Activated CD4-positive, alpha-beta memory T cell treated with anti-CD3 and anti-CD28 coated beads for 36 hours (primary cell): ENCODE measurements at regions of chr10 and their contacts with region 1.

Region 1: DNA sequence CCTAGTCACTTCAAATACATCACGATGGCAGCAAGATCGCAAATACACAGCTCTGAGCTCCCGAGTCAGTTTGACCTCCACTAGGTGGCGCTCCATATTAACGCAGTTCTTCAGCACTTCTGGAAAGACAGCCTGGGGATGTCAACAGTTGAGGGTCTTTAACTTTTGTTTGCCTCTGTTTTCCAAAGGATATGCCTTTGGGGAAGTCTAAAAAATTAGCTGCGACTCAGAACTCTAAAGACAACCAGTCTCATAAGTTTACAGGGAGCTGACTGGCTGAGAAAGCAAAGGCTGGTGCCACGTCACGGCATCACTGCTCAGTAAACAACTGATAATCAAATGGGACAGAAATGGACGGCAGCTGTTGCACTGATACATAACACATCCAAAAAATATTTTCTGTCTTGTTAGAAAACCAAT is 458.8 kb downstream of the SORCS1 start:
- DNase-seq: peak; percentile 33
- H3K4me3 Mint-ChIP-seq: no peak overlapping the region
- H3K27ac Mint-ChIP-seq: no peak overlapping the region
- H3K4me1 Mint-ChIP-seq: no peaks in the 10 kb centered on the region
- H3K27me3 Mint-ChIP-seq: no peaks in the 10 kb centered on the region

Region 2: DNA sequence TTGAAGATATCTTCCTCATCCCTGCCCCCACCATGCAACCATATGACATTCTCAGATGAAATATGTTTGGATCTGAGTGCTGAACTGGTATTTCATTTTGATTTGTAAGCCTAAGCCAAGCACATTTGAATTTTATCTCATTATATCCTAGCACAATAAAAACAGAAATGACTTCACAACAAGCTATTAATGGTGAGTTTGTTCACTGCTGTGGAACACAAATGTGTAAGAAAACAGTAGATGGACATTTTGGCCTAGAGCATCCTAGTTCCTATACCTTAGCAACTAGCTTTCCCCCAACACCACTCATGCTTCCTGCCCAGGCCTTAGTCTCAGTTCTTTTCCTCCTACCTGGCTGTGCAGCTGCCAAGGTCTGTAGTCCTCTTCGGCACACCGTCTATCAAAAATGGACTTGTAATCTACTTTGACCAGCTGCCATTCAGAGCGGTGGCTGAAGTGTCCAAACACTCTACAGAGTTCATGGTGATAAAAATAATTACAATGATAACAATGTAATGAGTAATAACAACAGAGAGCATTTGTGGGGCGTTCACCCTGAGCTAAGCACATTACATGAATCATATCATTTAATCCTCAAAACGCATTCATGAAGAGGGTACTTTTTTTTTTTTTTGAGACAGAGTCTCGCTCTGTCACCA is 33.0 kb before region 1 on chr10:
- CTCF ChIA-PET with region 1: no interaction called
- POLR2A ChIA-PET with region 1: no interaction called
- intact Hi-C with region 1: no loop called
- DNase-seq: no peak
- H3K4me3 Mint-ChIP-seq: no peak overlapping the region
- H3K27ac Mint-ChIP-seq: no peak overlapping the region
- H3K4me1 Mint-ChIP-seq: no peaks in the 10 kb centered on the region
- H3K27me3 Mint-ChIP-seq: no peaks in the 10 kb centered on the region

Region 3: GRCh38 chr10:106765241-106765754 is 59.6 kb after region 1 on chr10:
- CTCF ChIA-PET with region 1: no interaction called
- POLR2A ChIA-PET with region 1: no interaction called
- intact Hi-C with region 1: no loop called
- DNase-seq: no peak
- H3K4me3 Mint-ChIP-seq: no peak overlapping the region
- H3K27ac Mint-ChIP-seq: no peak overlapping the region
- H3K4me1 Mint-ChIP-seq: no peaks in the 10 kb centered on the region
- H3K27me3 Mint-ChIP-seq: no peaks in the 10 kb centered on the region

Region 4: GRCh38 chr10:108544494-108545120 is 1838.9 kb after region 1 on chr10:
- CTCF ChIA-PET with region 1: no interaction called
- POLR2A ChIA-PET with region 1: no interaction called
- intact Hi-C with region 1: loop called (anchors 10 kb)
- DNase-seq: peak; percentile 35
- H3K4me3 Mint-ChIP-seq: no peak overlapping the region
- H3K27ac Mint-ChIP-seq: no peak overlapping the region
- H3K4me1 Mint-ChIP-seq: no peaks in the 10 kb centered on the region
- H3K27me3 Mint-ChIP-seq: no peaks in the 10 kb centered on the region